ENCODE measurements at regions of chr11 and their contacts with region 1.

Region 1: GRCh38 chr11:34926101-34926830 is 9.8 kb downstream of the PDHX start:
- DNase-seq: no peak
- H3K4me3 ChIP-seq: no peak overlapping the region
- H3K27ac ChIP-seq: no peak overlapping the region
- H3K4me1 ChIP-seq: peaks cover 0 to 59% (median 13%) of the 10 kb centered on the region in 6 donors
- H3K27me3 ChIP-seq: no peaks in the 10 kb centered on the region
- CTCF ChIP-seq: peak; percentile 48 to 82 (median 63)
- POLR2A ChIP-seq: no peak

Region 2: DNA sequence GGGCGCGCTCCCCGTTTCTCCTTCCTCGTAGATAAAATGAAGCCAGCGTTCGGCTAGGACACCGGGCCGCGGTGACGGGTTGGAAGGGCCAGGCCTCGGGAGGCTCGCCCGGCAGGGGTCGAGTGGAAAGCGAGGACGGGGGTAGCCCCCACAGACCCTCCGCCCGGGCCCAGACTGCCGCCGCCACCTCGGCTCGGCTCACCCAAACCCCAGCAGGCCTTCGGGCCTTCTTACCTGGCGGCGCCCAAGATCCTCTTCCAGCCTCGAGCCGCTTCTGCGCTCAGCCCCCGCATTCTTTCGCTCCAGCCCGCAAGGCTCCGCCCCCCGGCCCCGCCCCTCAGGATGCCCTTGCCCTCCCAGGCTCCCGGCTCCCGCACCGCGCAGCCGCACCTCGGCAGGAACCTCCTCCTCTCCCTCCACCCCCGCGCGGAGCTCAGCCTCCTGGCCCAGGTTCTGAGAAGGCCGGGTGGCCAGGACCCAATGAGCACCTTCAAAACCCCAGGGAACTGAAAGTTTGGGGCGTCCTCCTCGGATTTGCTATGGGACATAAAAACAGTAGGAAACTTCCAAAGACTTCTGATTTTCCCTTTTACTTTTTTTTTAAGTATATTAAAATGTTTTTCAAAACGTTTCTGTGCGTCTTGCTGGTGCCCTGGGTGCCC is 1190.0 kb before region 1 on chr11 and contains the start of gene CD59:
- intact Hi-C with region 1: no loop called
- DNase-seq: peak; percentile 97
- H3K4me3 ChIP-seq: peak within 1 kb of the TSS; percentile 63 to 87 (median 82)
- H3K27ac ChIP-seq: peak within 1 kb of the TSS; percentile 61 to 93 (median 89)
- H3K4me1 ChIP-seq: peaks cover 15 to 58% (median 39%) of the 10 kb centered on the region in 6 donors
- H3K27me3 ChIP-seq: no peaks in the 10 kb centered on the region
- CTCF ChIP-seq: peak in 2 of 11 experiments; percentile 2 to 3
- POLR2A ChIP-seq: peak in 2 of 3 donors; percentile 10 to 54
- total RNA-seq, gene CD59: 163 to 281 (median 213) TPM

Region 3: DNA sequence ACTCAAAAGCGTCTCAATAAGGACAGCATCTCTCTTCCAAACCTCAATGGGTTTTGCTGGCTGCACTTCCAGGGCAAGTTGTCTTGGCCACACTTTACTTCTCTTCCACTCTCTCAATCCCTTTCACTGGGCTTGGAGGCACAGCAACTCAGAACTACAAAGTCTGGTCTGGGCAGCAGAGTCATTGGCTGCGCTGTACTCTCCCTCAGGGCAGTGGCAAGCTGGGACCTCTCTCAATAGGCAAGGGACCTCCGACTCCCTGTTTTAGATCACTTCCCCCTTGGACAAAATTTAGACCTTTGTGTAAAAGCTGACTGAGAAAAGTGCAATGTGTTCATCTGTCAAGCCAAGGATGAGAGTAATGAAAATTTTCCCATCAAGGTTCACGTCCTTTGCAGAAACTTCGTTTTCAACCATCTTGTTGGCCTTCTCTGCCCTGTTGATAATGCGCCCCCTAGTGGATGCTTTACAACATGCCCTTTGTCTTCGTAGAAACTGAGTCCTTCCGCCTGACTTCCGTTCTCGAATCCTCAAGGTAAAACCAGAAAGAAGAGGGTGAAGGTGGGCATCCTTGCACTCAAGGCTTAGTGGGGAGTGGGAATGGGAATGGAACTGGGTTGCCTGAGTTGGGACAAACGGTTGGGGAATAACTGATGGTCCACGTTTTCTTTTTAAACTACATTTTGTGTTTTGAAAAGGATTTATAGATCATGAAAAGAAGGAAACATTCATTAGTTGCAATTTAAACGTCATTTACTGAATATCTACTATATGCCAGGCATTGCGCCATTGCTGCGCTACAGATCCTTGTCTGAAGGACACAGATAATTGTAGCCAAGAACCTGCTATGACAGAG is 311.8 kb after region 1 on chr11:
- intact Hi-C with region 1: loop called (anchors 5 kb)
- DNase-seq: no peak
- H3K4me3 ChIP-seq: no peak overlapping the region
- H3K27ac ChIP-seq: no peak overlapping the region
- H3K4me1 ChIP-seq: peaks cover 10 to 44% (median 27%) of the 10 kb centered on the region in 6 donors
- H3K27me3 ChIP-seq: no peaks in the 10 kb centered on the region
- CTCF ChIP-seq: peak; percentile 43 to 88 (median 83)
- POLR2A ChIP-seq: no peak

Region 4: DNA sequence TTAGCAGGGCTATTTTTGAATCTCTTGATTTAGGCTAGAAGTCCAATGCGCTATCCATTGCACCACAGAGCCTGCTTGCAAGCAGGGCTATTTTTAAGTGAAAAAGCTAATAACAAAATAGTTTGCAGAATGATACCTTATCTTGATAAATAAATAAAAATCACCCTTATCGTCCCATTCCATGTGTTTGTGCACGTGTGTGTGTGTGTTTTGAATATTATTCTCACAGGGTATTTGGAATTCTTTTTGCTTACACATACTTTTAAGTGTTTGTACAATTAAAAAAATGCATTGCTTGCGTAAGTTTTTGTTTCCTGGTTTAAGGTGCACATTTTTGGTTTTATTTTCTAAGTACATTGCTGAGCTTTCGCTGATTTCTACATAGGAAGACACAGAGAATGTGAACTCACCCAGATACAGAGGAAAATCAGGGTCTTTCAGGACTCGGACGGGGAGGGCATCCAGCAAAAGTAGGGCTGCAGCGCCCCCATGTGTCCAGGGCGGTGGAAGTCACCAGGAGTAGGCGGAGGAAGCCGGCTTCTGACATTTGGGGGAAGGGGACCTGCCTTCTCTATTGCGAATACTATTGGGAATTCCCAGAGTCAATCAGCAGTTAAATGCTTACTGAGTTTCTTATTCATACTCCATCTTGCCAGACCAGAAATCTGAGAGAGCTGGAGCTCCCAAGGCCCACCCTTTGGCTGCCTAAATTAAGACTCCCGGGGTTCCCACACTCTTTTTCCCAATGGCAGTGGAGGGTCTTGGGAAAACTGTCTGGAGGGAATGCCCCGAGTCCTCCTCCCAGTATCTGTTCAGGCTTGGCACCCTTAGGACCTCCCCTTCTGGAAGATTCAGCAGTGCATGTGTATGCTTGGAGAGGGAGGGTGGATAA is 465.9 kb after region 1 on chr11:
- intact Hi-C with region 1: loop called (anchors 5 kb)
- DNase-seq: peak; percentile 94
- H3K4me3 ChIP-seq: peak overlapping the region in 1 of 8 donors; percentile 12
- H3K27ac ChIP-seq: no peak overlapping the region
- H3K4me1 ChIP-seq: peaks cover 4 to 20% (median 16%) of the 10 kb centered on the region in 6 donors
- H3K27me3 ChIP-seq: peaks cover 0 to 7% (median 0%) of the 10 kb centered on the region in 7 donors
- CTCF ChIP-seq: peak; percentile 74 to 93 (median 89)
- POLR2A ChIP-seq: no peak

Region 5: GRCh38 chr11:35485656-35486322 is 559.5 kb after region 1 on chr11:
- intact Hi-C with region 1: loop called (anchors 5 kb)
- DNase-seq: peak; percentile 85
- H3K4me3 ChIP-seq: no peak overlapping the region
- H3K27ac ChIP-seq: no peak overlapping the region
- H3K4me1 ChIP-seq: peaks cover 0 to 5% (median 0%) of the 10 kb centered on the region in 6 donors
- H3K27me3 ChIP-seq: peaks cover 0 to 40% (median 0%) of the 10 kb centered on the region in 7 donors
- CTCF ChIP-seq: peak; percentile 33 to 96 (median 89)
- POLR2A ChIP-seq: no peak